ENCODE measurements at regions of chr6 and their contacts with region 1.

Region 1: GRCh38 chr6:42547407-42548329 is 16.2 kb upstream of the UBR2 start:
- DNase-seq: peak; percentile 63
- H3K4me3 ChIP-seq: peak overlapping the region; percentile 10 to 34
- H3K27ac ChIP-seq: peak overlapping the region; percentile 2 to 53
- H3K4me1 ChIP-seq: no peaks in the 10 kb centered on the region
- H3K27me3 ChIP-seq: no peaks in the 10 kb centered on the region
- CTCF ChIP-seq: peak; percentile 86 to 94 (median 92)
- POLR2A ChIP-seq: no peak

Region 2: GRCh38 chr6:42075159-42075838 is 472.4 kb before region 1 on chr6:
- intact Hi-C with region 1: loop called (anchors 10 kb)
- DNase-seq: peak; percentile 82
- H3K4me3 ChIP-seq: no peak overlapping the region
- H3K27ac ChIP-seq: no peak overlapping the region
- H3K4me1 ChIP-seq: no peaks in the 10 kb centered on the region
- H3K27me3 ChIP-seq: no peaks in the 10 kb centered on the region
- CTCF ChIP-seq: peak; percentile 78 to 93 (median 88)
- POLR2A ChIP-seq: no peak

Region 3: GRCh38 chr6:42217519-42218367 is 329.9 kb before region 1 on chr6 and contains the start of gene MRPS10:
- intact Hi-C with region 1: loop called (anchors 2 kb)
- DNase-seq: peak; percentile 90
- H3K4me3 ChIP-seq: peak within 1 kb of the TSS; percentile 53 to 66
- H3K27ac ChIP-seq: peak within 1 kb of the TSS; percentile 51 to 72
- H3K4me1 ChIP-seq: no peaks in the 10 kb centered on the region
- H3K27me3 ChIP-seq: no peaks in the 10 kb centered on the region
- CTCF ChIP-seq: peak in 1 of 4 experiments; percentile 3
- POLR2A ChIP-seq: peak; percentile 45
- total RNA-seq, gene MRPS10: 27.5 to 31.8 TPM

Region 4: GRCh38 chr6:42260972-42261371 is 286.7 kb before region 1 on chr6:
- intact Hi-C with region 1: loop called (anchors 5 kb)
- DNase-seq: no peak
- H3K4me3 ChIP-seq: no peak overlapping the region
- H3K27ac ChIP-seq: peak overlapping the region; percentile 6 to 62
- H3K4me1 ChIP-seq: no peaks in the 10 kb centered on the region
- H3K27me3 ChIP-seq: no peaks in the 10 kb centered on the region
- CTCF ChIP-seq: peak; percentile 39 to 64 (median 48)
- POLR2A ChIP-seq: no peak

Region 5: GRCh38 chr6:42453031-42453653 is 94.5 kb before region 1 on chr6:
- intact Hi-C with region 1: loop called (anchors 5 kb)
- DNase-seq: peak; percentile 84
- H3K4me3 ChIP-seq: peak overlapping the region; percentile 55 to 75
- H3K27ac ChIP-seq: peak overlapping the region; percentile 74 to 87
- H3K4me1 ChIP-seq: peaks cover 14% of the 10 kb centered on the region
- H3K27me3 ChIP-seq: no peaks in the 10 kb centered on the region
- CTCF ChIP-seq: no peak
- POLR2A ChIP-seq: peak; percentile 64

Measured in prostate gland (tissue), 2 donors.